ENCODE measurements at regions of chr10 and their contacts with region 1.

Region 1: DNA sequence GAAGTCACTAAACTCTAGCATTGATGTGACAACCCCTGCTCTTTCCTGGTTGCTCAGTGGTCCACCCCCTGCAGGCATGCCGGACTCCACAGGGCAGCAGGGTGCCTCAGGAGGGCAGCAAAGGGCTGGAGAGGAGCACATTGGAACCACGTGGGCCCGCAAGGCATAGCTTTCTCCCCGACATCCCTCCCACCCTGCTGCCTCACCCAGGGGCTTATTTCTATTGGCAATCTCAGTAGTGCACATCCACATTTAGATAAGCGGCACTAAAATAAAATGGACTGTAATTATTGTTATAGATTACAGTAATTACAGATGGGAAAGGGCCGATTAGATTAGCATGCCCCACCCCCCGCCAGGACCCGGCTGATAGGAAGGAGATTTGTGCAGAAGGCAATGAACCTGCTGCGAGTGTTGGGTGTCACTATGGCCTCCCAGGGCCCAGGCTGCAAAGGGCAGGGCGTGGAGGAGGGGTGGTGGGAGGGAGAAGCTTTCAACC is 580.1 kb downstream of the GRID1 start:
- DNase-seq: no peak
- ATAC-seq: peak in 1 of 2 donors; percentile 51

Region 2: DNA sequence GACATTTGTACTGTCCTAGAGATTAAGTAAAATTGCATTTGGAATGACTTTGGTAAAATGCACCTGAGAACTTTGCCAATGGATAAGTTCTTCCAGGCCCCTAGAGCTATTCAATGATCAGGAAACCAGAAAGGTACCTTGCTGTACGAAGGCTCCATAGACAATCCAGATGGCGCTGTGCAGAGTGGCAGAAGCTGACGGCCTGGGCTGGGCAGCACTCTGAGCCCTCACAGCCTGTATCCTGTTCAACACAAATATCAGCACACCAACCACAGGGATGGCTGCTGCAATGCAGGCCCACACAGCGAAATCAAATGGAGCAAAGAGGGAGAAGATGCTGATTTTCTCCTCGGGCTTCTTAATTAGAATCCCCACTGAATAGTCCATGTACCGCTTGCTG is 62.2 kb before region 1 on chr10:
- intact Hi-C with region 1: no loop called
- DNase-seq: no peak
- ATAC-seq: no peak

Region 3: DNA sequence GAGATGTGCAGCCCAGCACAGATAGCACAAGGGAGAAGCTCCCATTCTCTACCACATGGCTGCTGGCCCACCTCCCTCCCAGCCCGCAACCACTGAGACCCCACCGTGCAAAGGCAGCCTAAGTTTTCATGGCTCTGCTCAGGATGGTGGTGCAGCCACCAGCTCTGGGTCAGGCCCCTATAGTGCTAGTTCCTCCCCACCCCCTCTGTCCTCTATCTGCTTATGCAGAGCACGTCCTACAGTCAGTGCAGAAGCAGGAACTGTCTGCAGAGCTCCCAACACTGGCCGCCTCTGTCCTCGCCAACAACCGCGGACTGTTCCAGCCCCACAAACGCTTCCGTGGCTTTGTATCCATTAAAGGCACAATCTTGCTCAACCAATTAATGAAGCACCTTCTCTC is 301.3 kb after region 1 on chr10:
- intact Hi-C with region 1: loop called in 1 of 2 experiments (anchors 10 kb)
- DNase-seq: no peak
- ATAC-seq: no peak

Region 4: GRCh38 chr10:86366033-86366901 is 579.8 kb after region 1 on chr10 and contains the start of gene GRID1:
- intact Hi-C with region 1: loop called (anchors 10 kb)
- DNase-seq: peak; percentile 36
- ATAC-seq: peak; percentile 45 to 54
- total RNA-seq, gene GRID1: 0.52 to 0.59 TPM

Measured in left cardiac atrium (tissue), 4 donors.